Sciatic nerve (tissue), 2 donors: ENCODE measurements at regions of chr2 and their contacts with region 1.

Region 1: DNA sequence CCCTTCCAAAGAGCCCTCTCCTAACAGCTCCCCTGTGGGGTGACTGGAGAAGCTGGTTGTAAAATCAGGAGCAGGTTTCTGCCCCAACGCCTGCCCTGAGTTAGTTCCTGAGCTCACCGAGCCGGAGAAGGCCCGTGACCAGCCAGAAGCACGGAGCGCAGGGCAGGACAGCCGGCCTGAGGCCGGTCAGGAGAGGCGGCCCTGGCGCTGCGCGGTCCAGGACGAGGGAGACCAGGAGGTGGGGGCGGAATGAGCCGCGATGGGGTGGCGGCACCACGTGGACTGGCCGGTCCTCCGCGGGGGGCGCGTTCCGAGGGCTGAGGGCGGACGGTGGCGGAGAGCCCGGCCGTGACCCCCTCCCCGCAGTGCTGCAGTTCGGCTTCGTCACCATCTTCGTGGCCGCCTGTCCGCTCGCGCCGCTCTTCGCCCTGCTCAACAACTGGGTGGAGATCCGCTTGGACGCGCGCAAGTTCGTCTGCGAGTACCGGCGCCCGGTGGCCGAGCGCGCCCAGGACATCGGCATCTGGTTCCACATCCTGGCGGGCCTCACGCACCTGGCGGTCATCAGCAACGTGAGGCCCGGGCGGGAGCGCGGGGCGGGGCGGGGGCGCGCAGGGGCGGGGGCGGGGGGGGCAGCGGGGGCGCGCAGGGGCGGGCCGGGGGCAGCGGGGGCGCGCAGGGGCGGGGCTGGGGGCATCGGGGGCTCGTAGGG is 29.0 kb downstream of the ANO7 start:
- DNase-seq: peak; percentile 84
- ATAC-seq: peak; percentile 90

Region 2: GRCh38 chr2:240868286-240869108 is 349.0 kb before region 1 on chr2 and contains the start of gene AGXT:
- intact Hi-C with region 1: loop called (anchors 10 kb)
- DNase-seq: no peak
- ATAC-seq: peak; percentile 45
- total RNA-seq, gene AGXT: not detected